Posterior vena cava (tissue), 2 donors: ENCODE measurements at regions of chr22 and their contacts with region 1.

Region 1: DNA sequence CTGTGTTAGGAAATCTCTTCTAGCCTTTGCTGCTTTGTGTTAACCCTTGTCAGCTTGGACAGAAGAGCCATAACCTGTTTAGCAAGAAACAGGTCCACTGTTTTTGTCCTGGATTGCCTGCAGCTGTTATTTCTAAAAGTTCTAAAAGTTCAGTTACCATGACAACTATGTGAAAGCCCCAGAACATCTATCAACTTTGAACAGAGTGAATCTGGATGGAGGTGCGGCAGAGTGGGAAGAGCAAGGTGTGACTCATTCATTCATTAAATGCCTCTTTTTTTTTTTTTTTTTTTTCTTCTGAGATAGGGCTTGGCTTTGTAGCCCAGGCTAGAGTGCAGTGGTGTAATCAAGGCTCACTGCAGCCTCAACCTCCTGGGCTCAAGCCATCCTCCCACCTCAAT is 50.5 kb downstream of the RBX1 start:
- DNase-seq: no peak

Region 2: DNA sequence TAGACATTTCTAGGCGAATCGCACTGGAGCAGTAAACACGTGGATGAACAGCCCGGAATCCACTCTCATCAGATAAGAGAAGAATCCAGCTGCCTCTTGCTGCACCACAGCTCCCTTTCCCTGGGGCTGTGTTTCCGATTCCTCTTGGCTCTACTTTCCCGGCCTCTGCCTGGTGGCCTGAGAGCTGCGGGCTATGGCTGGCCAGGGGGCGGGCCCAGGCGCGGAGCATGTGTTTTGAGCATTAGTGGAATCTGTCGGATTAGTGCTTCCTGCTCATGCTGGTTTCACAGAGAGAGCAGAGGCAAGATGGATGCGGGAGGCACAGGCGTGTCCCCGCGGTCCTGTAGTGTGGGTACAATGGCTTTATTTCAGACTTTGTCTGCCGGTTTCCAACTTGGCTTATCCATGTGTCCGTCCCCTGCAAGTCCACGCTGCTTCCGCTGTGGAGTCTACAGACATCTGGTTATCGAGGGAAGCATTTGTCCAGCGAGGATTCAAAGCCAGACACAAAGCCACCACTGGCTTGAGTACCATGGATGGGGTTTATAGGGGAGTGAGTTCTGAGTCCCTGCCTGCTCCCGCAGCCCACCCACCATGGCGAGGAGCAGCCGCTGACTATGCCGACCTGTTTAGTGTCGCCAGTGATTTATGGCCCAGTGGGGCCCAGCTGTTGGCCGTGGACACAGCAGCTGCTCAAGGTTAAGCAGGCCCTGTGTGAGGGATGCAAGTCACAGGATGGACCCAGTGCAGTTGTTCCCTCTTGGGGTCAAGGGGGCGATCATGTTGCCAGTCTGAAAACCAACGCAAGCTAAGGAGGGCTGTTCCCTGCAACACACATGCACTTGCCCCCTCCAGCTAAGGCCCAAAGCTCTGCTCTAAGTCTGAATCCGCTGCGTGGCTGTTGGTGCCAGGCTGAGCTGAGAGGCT is 47.3 kb after region 1 on chr22:
- intact Hi-C with region 1: loop called in 1 of 2 experiments (anchors 1 kb)
- DNase-seq: peak; percentile 86

Region 3: DNA sequence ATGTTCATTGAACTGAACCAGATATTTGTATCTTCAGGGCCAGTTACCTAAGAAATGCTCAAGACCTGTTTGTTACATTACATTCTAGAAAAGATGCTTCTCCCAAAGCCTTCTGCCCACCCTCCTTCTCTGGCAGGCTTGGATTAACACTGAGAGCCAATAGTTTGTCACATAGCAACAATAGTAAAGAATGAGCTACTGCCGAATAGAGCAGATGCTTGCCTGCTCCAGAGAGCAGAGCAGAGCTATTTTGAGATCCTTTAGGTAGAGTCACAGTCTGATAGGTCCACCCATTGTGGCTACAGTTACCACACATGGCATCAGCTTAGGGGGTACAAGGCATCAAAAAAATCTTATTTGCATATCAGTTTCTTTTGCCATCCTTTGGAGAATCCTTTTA is 77.2 kb after region 1 on chr22:
- intact Hi-C with region 1: loop called in 1 of 2 experiments (anchors 10 kb)
- DNase-seq: no peak